Mammary epithelial cell (primary cell): ENCODE measurements at regions of chr6 and their contacts with region 1.

Region 1: GRCh38 chr6:127212376-127212775 is 54.3 kb upstream of the RNF146 start:
- DNase-seq: no peak
- H3K4me3 ChIP-seq: no peak overlapping the region
- H3K27ac ChIP-seq: no peak overlapping the region
- H3K4me1 ChIP-seq: no peaks in the 10 kb centered on the region
- H3K27me3 ChIP-seq: no peaks in the 10 kb centered on the region
- CTCF ChIP-seq: no peak

Region 2: DNA sequence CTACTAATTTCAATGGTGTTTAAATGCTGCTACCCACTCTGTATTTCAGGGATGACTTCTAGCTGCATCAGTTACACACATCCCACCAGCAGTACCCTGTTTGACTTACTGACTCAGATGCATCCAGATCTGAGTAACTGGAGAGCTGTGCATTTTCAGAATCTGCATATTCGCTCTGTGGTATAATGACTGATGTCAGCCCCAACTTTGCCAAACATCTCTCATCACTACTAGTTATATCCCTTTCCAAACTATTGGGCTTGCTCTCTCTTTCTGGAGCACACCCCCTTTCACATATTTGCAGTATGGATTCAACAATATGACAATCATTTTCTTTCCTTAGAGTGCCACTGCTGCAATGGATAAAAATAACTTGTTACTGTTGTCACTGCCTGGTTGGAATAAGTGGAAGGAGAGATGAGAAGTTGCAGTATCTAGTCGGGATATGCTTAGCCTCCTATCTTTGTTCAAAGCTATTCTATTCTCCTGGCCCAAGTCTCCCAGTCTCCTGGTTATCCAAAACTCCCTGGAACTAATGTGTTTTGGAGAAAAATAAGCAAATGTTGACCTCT is 97.2 kb before region 1 on chr6:
- CTCF ChIA-PET with region 1: no interaction called
- dilution Hi-C with region 1: no loop called
- in situ Hi-C with region 1: no loop called
- intact Hi-C with region 1: no loop called
- DNase-seq: no peak
- H3K4me3 ChIP-seq: no peak overlapping the region
- H3K27ac ChIP-seq: no peak overlapping the region
- H3K4me1 ChIP-seq: peaks cover 12% of the 10 kb centered on the region
- H3K27me3 ChIP-seq: peaks cover 39% of the 10 kb centered on the region
- CTCF ChIP-seq: no peak

Region 3: DNA sequence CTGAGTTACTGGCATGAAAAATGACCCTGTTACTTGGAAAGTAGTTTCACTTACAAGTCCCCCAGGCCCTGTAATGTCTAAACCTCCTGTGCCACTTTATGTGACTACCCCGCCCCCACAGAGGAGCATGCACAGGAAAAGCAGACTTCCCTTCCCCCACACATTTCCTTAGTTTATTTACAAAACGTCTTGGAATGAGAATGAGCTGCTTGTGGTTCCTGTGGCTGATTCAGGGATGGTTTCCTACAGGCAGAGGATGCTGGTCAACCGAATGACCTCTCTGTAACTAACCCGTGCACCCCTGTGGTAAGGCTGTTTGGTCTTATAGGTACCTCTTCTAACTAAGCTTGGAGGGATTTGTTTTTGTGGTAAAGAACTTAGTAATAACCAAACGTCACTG is 65.4 kb before region 1 on chr6:
- CTCF ChIA-PET with region 1: no interaction called
- dilution Hi-C with region 1: loop called (anchors 5 kb)
- in situ Hi-C with region 1: no loop called
- intact Hi-C with region 1: no loop called
- DNase-seq: peak; percentile 54
- H3K4me3 ChIP-seq: no peak overlapping the region
- H3K27ac ChIP-seq: no peak overlapping the region
- H3K4me1 ChIP-seq: no peaks in the 10 kb centered on the region
- H3K27me3 ChIP-seq: peaks cover 7% of the 10 kb centered on the region
- CTCF ChIP-seq: no peak